Activated CD4-positive, alpha-beta T cell treated with anti-CD3 and anti-CD28 coated beads, Interleukin-2, amount 10 ng/mL, durations not matched to agents 24 days and 14 days (primary cell): ENCODE measurements at regions of chr7 and their contacts with region 1.

Region 1: DNA sequence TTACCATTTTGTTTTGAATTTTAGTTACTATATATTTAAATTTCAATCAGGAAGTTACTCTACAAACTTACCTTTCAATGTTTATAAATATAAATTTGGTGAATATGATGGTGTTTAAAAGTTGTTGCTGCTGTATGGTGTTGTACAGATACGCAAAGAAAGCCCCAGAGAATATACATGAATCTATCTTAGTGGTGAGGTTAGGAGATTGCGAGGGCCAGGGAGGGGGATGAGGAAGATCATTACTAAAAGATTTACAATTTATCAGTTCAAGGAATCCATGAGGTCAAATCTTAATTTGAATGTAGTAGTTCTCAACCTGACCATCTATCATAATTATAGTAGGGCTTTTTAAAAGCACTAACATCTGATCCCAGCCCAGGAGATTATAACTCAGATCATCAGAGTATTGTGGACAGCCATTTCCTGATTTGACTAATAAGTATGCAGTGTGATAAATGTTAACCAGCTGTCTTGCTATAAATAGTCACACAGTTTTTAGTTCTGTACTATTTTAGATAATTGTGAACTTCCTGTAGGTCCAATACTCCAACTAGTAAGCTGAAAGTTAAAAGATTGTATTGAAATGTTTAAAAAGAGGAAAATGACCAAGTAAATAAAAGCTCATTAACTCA is 23.6 kb downstream of the FAM3C start:
- DNase-seq: no peak
- H3K4me3 Mint-ChIP-seq: peak overlapping the region; percentile 61
- H3K27ac Mint-ChIP-seq: peak overlapping the region; percentile 79
- H3K4me1 Mint-ChIP-seq: peaks cover 41% of the 10 kb centered on the region
- H3K27me3 Mint-ChIP-seq: no peaks in the 10 kb centered on the region

Region 2: DNA sequence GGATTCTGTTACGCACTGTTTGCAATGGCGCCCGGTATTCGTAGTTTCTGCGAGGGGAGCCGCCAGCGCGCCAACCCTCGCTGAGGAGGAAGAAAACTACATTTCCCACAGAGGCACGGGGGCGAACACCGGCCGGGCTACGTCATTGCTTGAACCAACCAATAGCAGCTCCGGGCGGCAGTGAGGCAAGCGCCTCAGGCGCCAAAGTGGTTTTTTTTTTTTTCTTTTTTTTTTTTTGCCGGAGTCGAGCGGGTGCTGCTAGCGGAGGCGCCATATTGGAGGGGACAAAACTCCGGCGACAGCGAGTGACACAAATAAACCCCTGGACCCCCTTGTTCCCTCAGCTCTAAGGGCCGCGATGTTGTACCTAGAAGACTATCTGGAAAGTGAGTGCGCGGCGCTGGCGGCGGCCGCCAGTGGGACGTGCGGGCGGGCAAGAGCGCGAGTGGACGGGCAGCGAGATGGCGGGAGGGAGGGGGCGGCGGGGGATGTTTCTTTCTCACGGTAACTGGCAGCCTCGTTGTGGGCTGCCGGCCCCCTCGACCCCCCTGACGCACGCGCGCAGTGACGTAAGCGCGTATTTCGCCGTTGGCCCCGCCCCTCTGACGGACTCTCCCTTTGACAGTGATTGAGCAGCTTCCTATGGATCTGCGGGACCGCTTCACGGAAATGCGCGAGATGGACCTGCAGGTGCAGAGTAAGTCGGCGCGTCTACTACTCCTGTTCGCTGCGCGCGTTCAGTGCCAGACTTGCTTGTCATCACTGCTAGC is 421.8 kb before region 1 on chr7 and contains the start of gene ING3:
- intact Hi-C with region 1: loop called (anchors 10 kb)
- DNase-seq: peak; percentile 100
- H3K4me3 Mint-ChIP-seq: peak within 1 kb of the TSS; percentile 96
- H3K27ac Mint-ChIP-seq: peak within 1 kb of the TSS; percentile 99
- H3K4me1 Mint-ChIP-seq: peaks cover 23% of the 10 kb centered on the region
- H3K27me3 Mint-ChIP-seq: peaks cover 17% of the 10 kb centered on the region
- total RNA-seq, gene ING3: 23.5 and 24.3 TPM in 2 replicates

Region 3: GRCh38 chr7:121385800-121386179 is 13.3 kb after region 1 on chr7:
- intact Hi-C with region 1: loop called (anchors 1 kb)
- DNase-seq: no peak
- H3K4me3 Mint-ChIP-seq: peak overlapping the region; percentile 16
- H3K27ac Mint-ChIP-seq: no peak overlapping the region
- H3K4me1 Mint-ChIP-seq: peaks cover 67% of the 10 kb centered on the region
- H3K27me3 Mint-ChIP-seq: no peaks in the 10 kb centered on the region

Region 4: GRCh38 chr7:121437456-121438127 is 65.1 kb after region 1 on chr7:
- intact Hi-C with region 1: loop called (anchors 1 kb)
- DNase-seq: no peak
- H3K4me3 Mint-ChIP-seq: peak overlapping the region; percentile 73
- H3K27ac Mint-ChIP-seq: peak overlapping the region; percentile 92
- H3K4me1 Mint-ChIP-seq: peaks cover 36% of the 10 kb centered on the region
- H3K27me3 Mint-ChIP-seq: no peaks in the 10 kb centered on the region

Region 5: DNA sequence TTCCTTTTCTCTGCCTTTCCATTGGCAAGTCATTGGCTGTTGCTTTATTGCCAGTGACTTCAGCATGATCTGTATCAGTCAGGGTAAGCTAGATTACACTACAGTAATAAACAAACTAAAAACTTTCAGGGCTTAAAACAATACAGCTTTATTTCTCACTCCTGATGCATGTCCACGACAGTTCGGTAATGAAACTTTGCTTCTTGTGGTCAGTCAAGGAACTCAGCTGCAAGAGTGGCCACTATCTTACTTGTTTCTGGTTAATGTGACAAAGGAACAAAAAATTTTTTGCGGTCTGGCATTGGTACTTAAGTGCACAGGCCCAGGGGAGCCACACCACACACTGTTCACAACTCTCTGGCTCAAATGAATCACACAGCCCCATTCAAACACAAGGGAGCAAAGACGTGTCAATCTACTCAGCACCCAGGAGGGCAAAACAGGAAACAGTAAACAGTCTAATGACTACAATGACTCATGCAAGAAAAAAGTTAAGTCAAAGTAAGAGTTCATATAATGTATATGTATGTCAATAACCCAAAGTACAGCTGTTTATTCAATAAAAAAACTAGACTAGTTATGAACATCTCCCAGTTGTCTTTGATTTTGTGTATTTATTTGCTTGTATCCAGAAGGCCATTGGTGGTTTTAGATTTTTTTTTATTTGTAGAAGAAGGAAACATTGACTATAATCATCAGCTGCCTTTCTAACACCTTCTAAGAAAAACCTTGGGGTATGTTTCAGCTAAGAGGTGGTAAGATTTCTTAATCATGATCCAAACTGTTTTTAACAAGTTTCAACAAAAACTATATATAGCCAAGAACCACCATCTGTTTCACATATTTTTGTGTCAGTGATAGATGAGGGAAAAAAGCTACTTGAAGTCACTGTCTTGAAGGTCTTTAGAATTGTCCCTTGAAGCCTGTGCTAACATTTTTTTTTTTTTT is 158.0 kb after region 1 on chr7:
- intact Hi-C with region 1: loop called (anchors 1 kb)
- DNase-seq: peak; percentile 89
- H3K4me3 Mint-ChIP-seq: peak overlapping the region; percentile 63
- H3K27ac Mint-ChIP-seq: peak overlapping the region; percentile 96
- H3K4me1 Mint-ChIP-seq: peaks cover 47% of the 10 kb centered on the region
- H3K27me3 Mint-ChIP-seq: no peaks in the 10 kb centered on the region